Head of caudate nucleus (tissue), 42 donors: ENCODE measurements at regions of chr7 and their contacts with region 1.

Region 1: GRCh38 chr7:74371381-74372341 is 82.0 kb upstream of the GTF2IRD1 start:
- DNase-seq: peak; percentile 46 to 90 (median 78)

Region 2: DNA sequence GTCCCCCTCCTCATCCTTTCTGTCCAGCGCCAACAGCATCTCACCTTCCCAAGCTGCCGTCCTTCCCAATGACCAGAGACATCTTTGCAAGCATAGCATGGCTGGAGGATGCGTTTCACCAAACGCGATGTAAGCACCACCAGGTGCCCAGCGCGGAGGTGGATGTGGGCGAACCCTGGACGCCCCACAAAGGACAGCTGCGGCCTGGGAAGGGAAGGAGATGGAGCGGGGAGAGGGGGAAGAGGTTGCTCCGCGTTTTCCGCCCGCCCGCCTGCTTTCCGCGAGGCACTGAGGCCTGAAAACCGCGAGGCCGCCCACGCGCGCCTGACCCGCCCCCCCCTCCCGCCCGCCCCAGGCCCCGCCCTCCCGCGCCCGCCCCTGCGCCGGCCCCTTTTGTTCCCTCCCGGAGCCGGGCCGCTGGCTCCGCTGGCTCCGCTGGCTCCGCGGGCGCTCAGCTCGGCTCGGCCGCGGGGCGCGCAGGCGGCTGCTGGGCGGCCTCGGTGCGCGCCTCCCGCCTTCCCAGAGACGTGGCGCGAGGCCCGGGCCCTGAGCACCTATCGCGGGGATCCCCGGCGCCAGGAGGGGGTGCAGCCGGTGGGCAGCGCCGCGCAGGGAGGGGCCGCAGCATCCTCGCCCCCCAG is 82.5 kb before region 1 on chr7 and contains the start of gene CLIP2:
- intact Hi-C with region 1: loop called (anchors 5 kb)
- DNase-seq: peak; percentile 67 to 95 (median 88)

Region 3: DNA sequence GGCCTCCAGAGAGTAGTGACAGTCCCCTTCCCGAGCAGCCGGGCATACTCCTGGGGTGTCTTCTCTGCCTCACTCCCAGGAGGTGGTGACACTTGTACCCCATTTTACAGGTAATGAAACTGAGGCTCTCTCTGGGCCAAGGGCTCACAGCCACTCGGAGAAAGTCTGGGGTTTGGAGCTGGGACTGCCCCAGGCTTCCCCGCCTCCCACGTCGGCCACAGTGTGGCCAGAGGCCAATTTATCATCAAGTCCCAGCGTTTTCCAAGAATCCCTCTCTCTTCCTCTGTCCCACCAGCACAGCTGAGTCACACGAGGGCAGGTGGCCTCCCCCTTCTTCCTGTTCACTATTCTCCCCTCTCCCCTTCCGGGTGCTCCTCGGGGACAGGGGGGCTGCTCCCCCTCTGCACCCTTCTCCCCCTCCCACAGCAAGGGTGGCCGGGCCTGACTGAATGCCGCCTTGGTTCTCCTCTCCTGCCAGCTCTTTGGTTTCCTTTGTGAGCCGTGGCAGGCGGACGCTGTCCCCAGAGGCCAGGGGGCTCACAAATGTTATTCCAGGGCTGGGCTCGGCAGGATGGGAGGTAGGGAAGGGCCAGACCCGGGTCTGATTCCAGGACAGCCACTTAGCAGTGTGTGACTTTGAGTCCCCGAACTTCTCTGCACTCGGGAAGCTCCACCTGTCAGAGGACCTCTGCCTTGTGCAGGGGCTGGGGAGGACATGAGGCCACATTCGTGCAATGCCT is 64.8 kb before region 1 on chr7:
- intact Hi-C with region 1: loop called (anchors 5 kb)
- DNase-seq: peak; percentile 45 to 89 (median 71)

Region 4: GRCh38 chr7:74412056-74412455 is 40.4 kb after region 1 on chr7:
- intact Hi-C with region 1: no loop called
- DNase-seq: no peak

Region 5: DNA sequence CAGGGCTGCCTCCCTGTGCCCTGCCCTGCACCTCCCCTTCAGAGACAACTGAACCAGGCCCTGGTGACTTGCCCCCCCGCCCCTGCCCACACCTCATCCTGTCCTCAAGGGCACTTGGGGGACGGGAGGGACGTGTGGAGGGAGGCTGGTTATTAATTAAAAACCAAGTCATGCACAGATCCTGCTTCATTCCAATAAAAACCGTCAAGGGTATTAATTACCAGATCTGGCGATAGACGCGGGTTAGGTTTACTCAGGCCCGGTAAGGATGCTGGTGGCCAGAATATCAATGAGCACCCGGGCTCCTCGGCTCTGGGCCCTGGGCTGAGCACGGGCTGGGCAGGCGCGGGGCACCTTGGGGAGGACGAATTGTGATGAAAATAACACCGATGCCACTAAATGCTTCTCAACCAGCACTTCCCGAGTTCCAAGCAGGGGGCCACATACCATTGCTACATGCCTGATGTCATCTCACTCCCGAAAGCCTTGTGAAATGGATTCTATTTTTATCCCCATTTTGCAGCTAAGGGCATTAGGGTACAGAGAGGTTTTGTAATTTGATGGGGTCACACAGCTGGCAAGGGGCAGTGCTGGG is 57.6 kb after region 1 on chr7:
- intact Hi-C with region 1: no loop called
- DNase-seq: no peak

Region 6: DNA sequence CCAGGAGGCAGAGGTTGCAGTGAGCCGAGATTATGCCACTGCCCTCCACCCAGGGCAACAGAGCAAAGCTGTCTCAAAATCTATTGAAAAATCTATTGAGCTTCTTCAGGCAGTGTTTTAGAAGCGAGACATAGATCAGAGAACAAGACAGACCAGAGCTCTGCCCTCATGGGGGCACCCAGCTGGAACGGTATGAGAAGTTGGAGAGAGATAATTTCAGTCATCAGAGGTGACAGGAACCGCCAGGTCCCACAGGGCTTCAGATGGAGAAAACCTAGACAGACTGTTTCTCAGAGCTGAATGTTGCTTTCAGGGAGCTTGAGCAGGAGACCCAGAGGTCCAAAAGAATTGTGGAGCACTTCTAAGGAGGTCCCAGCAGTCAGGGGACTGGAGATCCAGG is 67.9 kb after region 1 on chr7:
- intact Hi-C with region 1: no loop called
- DNase-seq: no peak